ENCODE measurements at regions of chr4 and their contacts with region 1.

Region 1: DNA sequence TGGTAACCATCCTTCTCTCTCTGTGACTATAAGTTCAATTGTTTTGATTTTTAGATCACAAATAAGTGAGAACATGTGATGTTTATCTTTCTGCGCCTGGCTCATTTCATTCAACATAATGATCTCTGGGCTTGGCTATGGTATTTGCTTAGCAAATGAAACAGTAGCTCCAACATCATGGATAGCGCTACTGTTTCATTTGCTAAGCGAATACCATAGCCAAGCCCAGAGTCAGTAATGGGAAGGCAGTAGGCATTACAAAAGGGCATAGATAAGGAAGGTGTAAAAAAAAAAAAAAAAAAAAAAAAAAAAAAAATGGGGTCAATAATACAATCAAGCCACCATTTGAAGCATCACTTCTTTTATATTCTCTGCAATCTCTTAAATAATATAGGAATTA is 469.0 kb upstream of the ATOH1 start:
- DNase-seq: no peak
- H3K4me3 ChIP-seq: no peak overlapping the region
- H3K27ac ChIP-seq: no peak overlapping the region
- H3K4me1 ChIP-seq: no peaks in the 10 kb centered on the region
- H3K27me3 ChIP-seq: no peaks in the 10 kb centered on the region
- CTCF ChIP-seq: no peak

Region 2: GRCh38 chr4:93228021-93228420 is 131.6 kb before region 1 on chr4:
- CTCF ChIA-PET with region 1: interaction called, 13 read pairs
- POLR2A ChIA-PET with region 1: no interaction called
- intact Hi-C with region 1: no loop called
- DNase-seq: no peak
- H3K4me3 ChIP-seq: no peak overlapping the region
- H3K27ac ChIP-seq: no peak overlapping the region
- H3K4me1 ChIP-seq: no peaks in the 10 kb centered on the region
- H3K27me3 ChIP-seq: no peaks in the 10 kb centered on the region
- CTCF ChIP-seq: no peak

Region 3: GRCh38 chr4:93373893-93374860 is 14.6 kb after region 1 on chr4:
- CTCF ChIA-PET with region 1: no interaction called
- POLR2A ChIA-PET with region 1: no interaction called
- intact Hi-C with region 1: no loop called
- DNase-seq: no peak
- H3K4me3 ChIP-seq: no peak overlapping the region
- H3K27ac ChIP-seq: no peak overlapping the region
- H3K4me1 ChIP-seq: no peaks in the 10 kb centered on the region
- H3K27me3 ChIP-seq: no peaks in the 10 kb centered on the region
- CTCF ChIP-seq: no peak